ENCODE measurements at regions of chr12 and their contacts with region 1.

Region 1: GRCh38 chr12:124422570-124423523 is 128.0 kb downstream of the RFLNA start:
- DNase-seq: peak; percentile 93 to 95 (median 94)
- ATAC-seq: peak; percentile 72 to 85 (median 80)
- H3K4me3 ChIP-seq: peak overlapping the region in 10 of 12 donors; percentile 8 to 34 (median 16)
- H3K27ac ChIP-seq: peak overlapping the region; percentile 82 to 94 (median 90)
- H3K4me1 ChIP-seq: peaks cover 6 to 79% (median 51%) of the 10 kb centered on the region in 12 donors
- H3K27me3 ChIP-seq: no peaks in the 10 kb centered on the region
- CTCF ChIP-seq: no peak
- POLR2A ChIP-seq: no peak

Region 2: DNA sequence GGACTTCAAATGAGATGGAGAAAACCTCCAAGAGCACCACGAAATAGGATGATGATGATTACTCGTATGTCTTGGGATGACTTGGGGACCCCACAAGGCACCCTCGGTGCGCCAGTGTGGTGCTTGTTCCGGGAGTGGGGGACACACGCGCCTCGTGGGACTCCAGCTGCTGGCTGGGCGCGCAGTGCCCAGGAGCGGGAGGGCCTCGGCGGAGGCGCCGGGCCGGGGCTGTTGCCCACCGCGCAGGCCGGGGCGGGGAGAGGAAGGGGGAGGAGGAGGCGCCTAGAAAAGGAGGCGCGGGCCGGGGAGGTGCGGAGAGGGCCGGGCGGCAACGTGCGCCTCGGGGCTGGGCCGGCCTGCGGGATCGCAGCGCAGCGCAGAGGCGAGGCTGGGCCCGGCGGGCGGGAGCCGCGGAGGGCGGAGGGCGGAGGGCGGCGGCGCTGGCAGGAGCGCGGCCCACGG is 128.0 kb before region 1 on chr12 and contains the start of gene RFLNA:
- intact Hi-C with region 1: no loop called
- DNase-seq: peak in 1 of 5 donors; percentile 52
- ATAC-seq: peak in 3 of 4 donors; percentile 29 to 65 (median 63)
- H3K4me3 ChIP-seq: peak within 1 kb of the TSS in 11 of 12 donors; percentile 7 to 57 (median 43)
- H3K27ac ChIP-seq: no peak within 1 kb of the TSS
- H3K4me1 ChIP-seq: peaks cover 3 to 25% (median 12%) of the 10 kb centered on the region in 12 donors
- H3K27me3 ChIP-seq: peaks cover 2 to 35% (median 19%) of the 10 kb centered on the region in 9 donors
- CTCF ChIP-seq: no peak
- POLR2A ChIP-seq: no peak
- total RNA-seq, gene RFLNA: 0.17 to 0.63 (median 0.27) TPM in 4 of 9 donors, not detected in the others

Region 3: DNA sequence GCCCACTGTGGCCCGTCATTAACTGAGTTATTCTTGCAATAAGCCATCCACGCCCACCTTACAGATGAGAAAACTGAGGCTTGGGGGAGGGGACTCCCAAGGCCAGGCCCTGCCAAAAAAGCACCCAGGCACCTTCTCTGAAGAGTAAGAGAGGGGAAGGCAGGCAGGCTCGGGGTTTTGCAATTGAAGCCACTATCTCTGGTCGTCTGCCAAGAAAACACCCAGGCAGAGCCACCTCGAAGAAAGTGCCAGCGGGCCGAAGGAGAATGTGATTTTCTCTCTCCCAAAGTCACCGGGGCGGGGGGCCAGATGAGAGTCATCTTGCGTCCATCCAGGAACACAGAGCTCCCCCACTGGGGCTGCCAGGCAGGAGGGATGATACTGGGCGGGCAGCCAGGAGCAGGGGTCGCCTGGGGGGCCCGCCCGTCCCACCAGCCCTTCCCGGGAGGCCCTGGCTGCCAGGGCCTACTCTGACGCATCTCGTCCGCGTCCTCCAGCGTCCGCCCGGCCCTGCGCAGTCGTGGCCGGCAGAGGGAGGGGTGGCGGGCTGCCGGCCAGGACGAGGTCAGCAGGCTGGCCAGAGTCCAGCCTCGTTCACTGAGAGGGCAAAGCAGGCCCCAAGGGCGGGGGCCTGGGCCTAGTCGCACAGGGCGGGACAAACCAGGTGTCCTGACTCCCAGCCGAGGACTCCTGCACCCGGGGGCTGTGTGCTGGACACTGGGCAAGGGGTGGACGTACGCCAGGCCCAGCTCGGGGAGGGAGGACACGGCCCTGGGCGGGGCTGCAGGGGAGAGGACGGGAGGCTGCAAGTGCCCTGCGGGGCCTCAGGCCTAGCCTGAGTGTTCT is 53.6 kb before region 1 on chr12:
- intact Hi-C with region 1: loop called in 2 of 10 experiments (anchors 5 to 10 kb)
- DNase-seq: peak; percentile 93 to 96 (median 94)
- ATAC-seq: peak; percentile 82 to 90 (median 88)
- H3K4me3 ChIP-seq: peak overlapping the region in 2 of 12 donors; percentile 12 to 16
- H3K27ac ChIP-seq: peak overlapping the region; percentile 74 to 99 (median 94)
- H3K4me1 ChIP-seq: peaks cover 8 to 76% (median 56%) of the 10 kb centered on the region in 12 donors
- H3K27me3 ChIP-seq: no peaks in the 10 kb centered on the region
- CTCF ChIP-seq: peak; percentile 23 to 69 (median 52)
- POLR2A ChIP-seq: peak in 1 of 2 donors; percentile 14

Region 4: GRCh38 chr12:124388679-124389536 is 33.9 kb before region 1 on chr12:
- intact Hi-C with region 1: loop called in 6 of 10 experiments (anchors 1 to 5 kb)
- DNase-seq: peak; percentile 89 to 93 (median 93)
- ATAC-seq: peak; percentile 21 to 67 (median 59)
- H3K4me3 ChIP-seq: peak overlapping the region; percentile 33 to 81 (median 64)
- H3K27ac ChIP-seq: peak overlapping the region; percentile 73 to 99 (median 96)
- H3K4me1 ChIP-seq: peaks cover 23 to 98% (median 90%) of the 10 kb centered on the region in 12 donors
- H3K27me3 ChIP-seq: no peaks in the 10 kb centered on the region
- CTCF ChIP-seq: peak in 3 of 12 donors; percentile 9 to 34 (median 22)
- POLR2A ChIP-seq: peak in 1 of 2 donors; percentile 52

Region 5: DNA sequence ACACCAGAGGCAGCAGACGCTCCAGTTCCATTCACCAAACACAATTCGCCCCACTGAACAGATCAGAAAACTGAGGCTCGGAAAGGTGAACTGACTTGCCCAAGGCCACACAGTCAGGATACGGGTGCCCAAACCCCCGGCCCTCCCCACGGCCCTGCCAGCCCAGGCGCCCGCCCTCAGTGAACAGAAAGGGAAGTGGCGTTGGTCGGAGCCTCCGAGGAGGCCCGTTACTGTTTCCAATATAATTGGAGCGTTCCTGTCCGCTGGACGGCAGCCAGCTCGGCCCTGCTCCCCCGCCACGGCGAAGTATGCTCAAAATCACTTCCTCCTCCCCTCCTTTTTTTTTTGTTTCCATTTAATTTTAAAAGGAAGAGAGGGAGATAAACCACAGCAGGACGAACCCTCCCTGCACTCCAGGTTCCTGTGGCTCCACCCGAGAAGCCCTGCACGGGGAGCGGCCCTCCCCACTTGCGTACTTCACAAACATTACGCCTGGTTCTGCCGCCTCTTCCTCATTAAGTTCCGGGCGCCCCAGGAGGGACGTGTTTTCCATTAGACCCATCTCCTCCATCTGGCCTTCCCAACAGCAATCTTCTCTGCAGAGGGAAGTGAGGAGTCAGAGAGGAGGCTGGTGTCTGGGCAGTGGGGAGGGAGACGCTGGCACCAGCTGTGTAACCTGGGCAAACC is 83.4 kb after region 1 on chr12:
- intact Hi-C with region 1: loop called in 2 of 10 experiments (anchors 5 kb)
- DNase-seq: peak; percentile 85 to 92 (median 88)
- ATAC-seq: peak; percentile 13 to 78 (median 36)
- H3K4me3 ChIP-seq: peak overlapping the region in 7 of 12 donors; percentile 1 to 22 (median 14)
- H3K27ac ChIP-seq: peak overlapping the region; percentile 71 to 92 (median 80)
- H3K4me1 ChIP-seq: peaks cover 16 to 95% (median 74%) of the 10 kb centered on the region in 12 donors
- H3K27me3 ChIP-seq: no peaks in the 10 kb centered on the region
- CTCF ChIP-seq: no peak
- POLR2A ChIP-seq: no peak

Region 6: GRCh38 chr12:124512667-124513296 is 89.9 kb after region 1 on chr12:
- intact Hi-C with region 1: loop called in 2 of 10 experiments (anchors 5 kb)
- DNase-seq: peak; percentile 85 to 94 (median 90)
- ATAC-seq: peak in 3 of 4 donors; percentile 13 to 53 (median 43)
- H3K4me3 ChIP-seq: no peak overlapping the region
- H3K27ac ChIP-seq: peak overlapping the region; percentile 19 to 83 (median 68)
- H3K4me1 ChIP-seq: peaks cover 14 to 99% (median 87%) of the 10 kb centered on the region in 12 donors
- H3K27me3 ChIP-seq: no peaks in the 10 kb centered on the region
- CTCF ChIP-seq: no peak
- POLR2A ChIP-seq: no peak

Measured in heart left ventricle (tissue), 16 donors.